Posterior vena cava (tissue), 2 donors: ENCODE measurements at regions of chr1 and their contacts with region 1.

Region 1: GRCh38 chr1:23979878-23980724 is at the start of gene SRSF10:
- DNase-seq: peak; percentile 100
- total RNA-seq, gene SRSF10: 74.1 to 77.4 TPM

Region 2: DNA sequence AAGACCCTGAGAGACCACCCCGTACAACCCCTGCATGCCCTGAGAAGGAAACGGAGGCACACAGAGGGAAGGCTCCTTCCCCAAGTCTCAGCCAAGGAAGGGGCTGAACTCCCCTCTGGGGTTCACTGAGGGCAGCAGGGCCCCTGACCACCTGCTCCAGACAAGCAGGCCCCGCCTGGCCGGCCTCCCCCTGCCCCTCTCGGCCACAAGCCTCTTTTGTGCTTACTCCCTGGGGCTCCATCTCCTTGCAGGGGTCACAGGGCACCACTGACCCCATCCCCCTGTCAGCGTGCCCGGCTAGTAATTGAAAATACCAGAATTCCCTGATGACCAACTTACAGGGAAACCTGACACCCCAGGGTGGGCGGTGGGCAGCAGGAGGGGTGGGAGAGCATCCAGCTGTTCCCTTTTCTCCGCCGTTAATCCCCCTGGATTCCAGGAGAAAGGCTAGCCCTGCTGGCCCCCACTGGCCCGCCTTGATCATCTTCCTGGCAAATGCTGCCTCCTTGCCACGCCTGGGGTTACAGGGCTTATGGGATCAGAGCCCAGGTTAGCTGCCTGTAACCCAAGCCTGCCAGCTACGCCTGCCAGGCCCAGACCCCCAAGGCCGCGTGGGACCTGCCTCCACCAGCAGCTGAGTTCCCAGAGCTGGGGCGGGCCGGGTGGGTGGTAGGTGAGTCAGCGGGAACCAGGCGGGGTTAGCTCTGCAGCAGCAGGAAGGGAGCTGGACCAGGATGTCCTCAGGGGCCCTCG is 1103.6 kb before region 1 on chr1:
- intact Hi-C with region 1: no loop called
- DNase-seq: no peak

Region 3: GRCh38 chr1:23825076-23825761 is 154.9 kb before region 1 on chr1 and contains the start of gene HMGCL:
- intact Hi-C with region 1: no loop called
- DNase-seq: peak; percentile 97
- total RNA-seq, gene HMGCL: 23.1 to 27.4 TPM

Region 4: GRCh38 chr1:24022581-24023361 is 42.7 kb after region 1 on chr1:
- intact Hi-C with region 1: loop called (anchors 5 kb)
- DNase-seq: no peak

Region 5: DNA sequence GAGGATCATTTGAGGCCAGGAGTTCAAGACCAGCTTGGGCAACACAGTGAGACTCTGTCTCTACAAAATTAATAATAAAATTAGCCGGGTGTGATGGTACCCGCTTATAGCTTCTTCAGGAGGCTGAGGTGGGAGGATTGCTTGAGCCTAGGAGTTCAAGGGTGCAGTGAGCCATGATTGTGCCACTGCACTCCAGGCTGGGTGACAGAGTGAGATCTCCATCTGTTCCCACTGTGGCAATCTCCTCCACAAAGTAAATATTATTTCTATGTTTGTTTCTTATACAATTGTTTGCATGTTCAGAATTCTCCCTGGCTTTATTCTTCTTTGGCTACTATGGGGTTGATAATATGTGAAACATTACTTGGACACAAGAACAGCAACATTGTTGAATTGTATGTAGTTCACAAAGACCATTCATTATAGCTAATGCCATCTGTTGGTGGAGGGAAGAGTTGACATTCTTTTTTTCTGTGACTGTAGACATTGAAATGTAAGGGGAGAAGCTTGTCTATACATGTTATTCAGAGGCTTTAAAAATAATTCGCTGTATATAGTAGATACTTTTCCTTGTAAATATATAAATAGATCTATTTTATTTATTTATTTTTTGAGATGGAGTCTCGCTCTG is 47.9 kb after region 1 on chr1:
- intact Hi-C with region 1: loop called (anchors 5 kb)
- DNase-seq: no peak

Region 6: GRCh38 chr1:25054526-25055323 is 1074.6 kb after region 1 on chr1:
- intact Hi-C with region 1: loop called in 1 of 2 experiments (anchors 10 kb)
- DNase-seq: peak; percentile 26